ENCODE measurements at regions of chr16 and their contacts with region 1.

Region 1: DNA sequence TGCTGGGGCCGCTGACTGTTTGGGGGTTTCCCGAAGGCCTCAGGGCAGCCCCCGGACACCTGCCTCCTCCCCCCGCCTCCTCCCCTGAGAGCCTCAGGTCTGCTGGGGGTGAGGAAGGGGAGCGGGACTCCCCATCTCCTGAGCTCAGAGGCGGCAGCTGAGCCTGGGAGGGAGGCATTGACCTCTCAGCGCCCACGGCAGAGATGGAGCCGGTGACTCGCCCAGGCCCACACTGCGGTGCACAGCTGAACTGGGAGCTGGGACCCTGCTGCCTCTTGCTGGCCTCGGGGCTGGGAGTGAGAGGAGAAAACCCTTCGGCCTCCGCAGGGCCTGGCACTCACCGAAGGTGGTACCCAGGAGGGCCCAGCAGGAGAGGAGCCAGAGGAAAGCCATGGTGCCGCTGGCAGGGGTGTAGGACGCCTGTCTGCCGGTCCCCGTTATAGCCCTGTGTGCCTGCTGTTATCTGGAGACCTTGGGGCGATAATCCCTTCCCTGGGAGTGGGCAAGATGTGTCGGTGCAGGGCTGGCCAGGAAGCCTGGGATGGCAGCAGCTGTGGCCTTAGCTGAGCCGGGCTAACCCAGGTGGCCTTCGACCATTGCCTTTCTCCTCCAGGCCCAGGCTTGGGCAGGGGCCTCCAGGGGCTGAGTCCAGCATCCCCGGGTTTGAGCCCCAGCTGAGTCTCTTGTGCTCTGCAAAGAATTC is at the start of gene CTRB2:
- DNase-seq: no peak
- ATAC-seq: no peak
- total RNA-seq, gene CTRB2: 7.3 TPM

Region 2: GRCh38 chr16:74874912-74875546 is 331.9 kb before region 1 on chr16:
- intact Hi-C with region 1: no loop called
- DNase-seq: no peak
- ATAC-seq: no peak

Region 3: DNA sequence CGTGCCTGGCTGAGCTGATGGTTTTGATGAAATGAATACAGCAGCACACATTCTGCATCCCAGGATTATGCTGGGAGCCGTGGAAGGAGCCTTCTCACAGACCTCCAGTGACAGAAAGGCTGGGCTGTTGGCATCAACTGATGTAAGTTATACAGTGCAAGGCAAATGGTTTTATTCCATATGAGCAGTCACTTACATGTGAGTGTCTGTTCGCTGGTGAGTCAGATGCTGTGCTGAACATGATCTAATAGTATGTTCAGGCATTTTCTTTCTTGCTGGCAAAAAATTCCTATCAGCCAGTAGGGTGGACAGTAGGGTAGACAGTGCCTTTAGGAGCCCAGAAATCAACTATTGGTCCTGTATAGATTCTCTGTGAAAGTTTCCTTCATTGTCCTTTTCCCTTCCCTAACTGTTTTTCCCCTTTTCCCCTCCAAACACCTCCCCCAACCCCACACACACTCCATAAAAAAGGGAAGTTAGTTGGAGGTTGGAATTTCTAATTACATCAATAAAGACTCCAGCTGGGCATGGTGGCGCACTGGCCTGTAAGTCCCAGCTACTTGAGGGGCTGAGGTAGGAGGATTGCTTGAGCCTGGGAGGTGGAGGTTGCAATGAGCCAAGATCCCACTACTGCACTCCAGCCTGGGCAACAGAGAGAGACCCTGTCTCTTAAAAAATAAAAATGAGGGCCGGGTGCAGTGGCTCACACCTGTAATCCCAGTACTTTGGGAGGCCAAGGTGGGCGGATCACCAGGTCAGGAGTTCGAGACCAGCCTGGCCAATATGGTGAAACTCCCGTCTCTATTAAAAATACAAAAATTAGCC is 126.5 kb before region 1 on chr16:
- intact Hi-C with region 1: no loop called
- DNase-seq: no peak
- ATAC-seq: no peak

Region 4: DNA sequence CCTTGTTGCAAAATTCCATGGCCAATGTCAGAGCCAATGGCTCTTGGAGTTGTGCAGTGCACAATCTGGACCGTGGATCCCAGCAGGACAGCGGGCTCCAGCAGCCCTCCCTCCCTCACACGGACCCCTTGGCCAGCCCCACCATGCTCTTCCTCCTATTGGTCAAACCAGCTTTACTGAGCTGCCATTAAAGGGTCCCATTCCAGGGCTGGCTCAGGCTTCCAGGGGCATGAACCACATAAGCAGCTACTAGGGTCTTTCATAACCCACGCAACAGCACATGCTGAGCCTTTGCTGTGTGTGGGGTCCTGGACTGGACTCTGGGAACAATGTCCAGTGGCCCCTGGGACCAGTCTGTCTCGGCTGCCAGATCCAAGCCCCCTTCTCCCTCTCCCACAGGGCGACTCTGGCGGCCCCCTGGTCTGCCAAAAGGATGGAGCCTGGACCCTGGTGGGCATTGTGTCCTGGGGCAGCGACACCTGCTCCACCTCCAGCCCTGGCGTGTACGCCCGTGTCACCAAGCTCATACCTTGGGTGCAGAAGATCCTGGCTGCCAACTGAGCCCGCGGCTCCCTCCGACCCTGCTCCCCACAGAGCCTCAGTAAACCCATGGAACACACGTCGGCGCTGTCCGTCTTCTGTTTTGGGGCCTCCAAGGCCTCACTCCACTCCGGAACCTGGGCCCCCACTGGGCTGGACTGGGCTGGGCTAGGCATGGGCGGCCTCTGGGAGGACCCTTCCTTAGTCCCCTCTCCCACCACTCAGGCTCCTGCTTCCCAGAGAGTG is 17.6 kb after region 1 on chr16:
- intact Hi-C with region 1: loop called (anchors 2 kb)
- DNase-seq: no peak
- ATAC-seq: no peak